ENCODE measurements at regions of chr12 and their contacts with region 1.

Region 1: DNA sequence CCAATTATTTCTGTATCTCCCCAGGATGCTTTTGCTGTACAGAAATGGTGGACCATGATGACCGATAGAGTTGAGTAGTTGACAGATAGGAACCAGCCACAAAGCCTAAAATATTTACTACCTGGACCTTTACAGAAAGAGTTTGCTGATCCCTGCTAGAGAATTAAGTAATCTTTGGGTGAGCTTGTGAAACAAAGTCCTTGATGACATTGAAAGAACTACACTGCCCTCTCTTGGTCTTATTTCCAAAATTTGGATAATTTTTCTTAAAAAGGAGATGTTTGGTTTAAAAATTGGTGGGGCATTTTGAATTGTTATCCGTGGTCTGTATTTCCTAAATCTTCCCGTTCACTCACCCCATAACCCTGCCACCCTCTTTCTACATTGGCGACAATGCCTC is 13.7 kb upstream of the TCTN1 start:
- DNase-seq: no peak
- ATAC-seq: peak; percentile 61
- H3K4me3 ChIP-seq: no peak overlapping the region
- H3K27ac ChIP-seq: no peak overlapping the region
- H3K4me1 ChIP-seq: peaks cover 13% of the 10 kb centered on the region
- H3K27me3 ChIP-seq: no peaks in the 10 kb centered on the region
- CTCF ChIP-seq: peak; percentile 18 to 69 (median 42); a peak in 4 of 6 replicates
- EP300 ChIP-seq: no peak
- POLR2A ChIP-seq: no peak
- RAD21 ChIP-seq: peak; percentile 85

Region 2: GRCh38 chr12:110449799-110450497 is 150.3 kb before region 1 on chr12 and contains the start of gene ARPC3:
- CTCF ChIA-PET with region 1: interaction called, 237 read pairs
- POLR2A ChIA-PET with region 1: interaction called, 25 read pairs
- RAD21 ChIA-PET with region 1: interaction called, 180 read pairs
- SMC1A ChIA-PET with region 1: interaction called, 152 read pairs
- in situ Hi-C with region 1: no loop called
- intact Hi-C with region 1: loop called (anchors 1 kb)
- DNase-seq: peak; percentile 77
- ATAC-seq: peak; percentile 98
- H3K4me3 ChIP-seq: peak within 1 kb of the TSS; percentile 97
- H3K27ac ChIP-seq: peak within 1 kb of the TSS; percentile 82
- H3K4me1 ChIP-seq: peaks cover 4% of the 10 kb centered on the region
- H3K27me3 ChIP-seq: no peaks in the 10 kb centered on the region
- CTCF ChIP-seq: peak; percentile 92 to 99 (median 94)
- EP300 ChIP-seq: no peak
- POLR2A ChIP-seq: peak; percentile 90
- RAD21 ChIP-seq: peak; percentile 93
- polyA plus RNA-seq, gene ARPC3: 635 to 890 TPM

Region 3: GRCh38 chr12:110508071-110508586 is 92.1 kb before region 1 on chr12:
- CTCF ChIA-PET with region 1: interaction called, 462 read pairs
- POLR2A ChIA-PET with region 1: interaction called, 31 read pairs
- RAD21 ChIA-PET with region 1: interaction called, 153 read pairs
- SMC1A ChIA-PET with region 1: interaction called, 492 read pairs
- in situ Hi-C with region 1: loop called (anchors 5 kb)
- intact Hi-C with region 1: loop called (anchors 1 kb)
- DNase-seq: no peak
- ATAC-seq: no peak
- H3K4me3 ChIP-seq: no peak overlapping the region
- H3K27ac ChIP-seq: no peak overlapping the region
- H3K4me1 ChIP-seq: no peaks in the 10 kb centered on the region; the same call in 1 of the 2 replicates
- H3K27me3 ChIP-seq: no peaks in the 10 kb centered on the region
- CTCF ChIP-seq: no peak
- EP300 ChIP-seq: no peak
- POLR2A ChIP-seq: no peak
- RAD21 ChIP-seq: no peak

Region 4: GRCh38 chr12:110548678-110549077 is 51.6 kb before region 1 on chr12:
- CTCF ChIA-PET with region 1: interaction called, 110 read pairs
- POLR2A ChIA-PET with region 1: interaction called, 3 read pairs
- RAD21 ChIA-PET with region 1: interaction called, 35 read pairs
- SMC1A ChIA-PET with region 1: interaction called, 92 read pairs
- in situ Hi-C with region 1: no loop called
- intact Hi-C with region 1: loop called (anchors 1 kb)
- DNase-seq: no peak
- ATAC-seq: no peak
- H3K4me3 ChIP-seq: no peak overlapping the region
- H3K27ac ChIP-seq: peak overlapping the region; percentile 31; the same call in 1 of the 2 replicates
- H3K4me1 ChIP-seq: peaks cover 16% of the 10 kb centered on the region
- H3K27me3 ChIP-seq: no peaks in the 10 kb centered on the region
- CTCF ChIP-seq: no peak
- EP300 ChIP-seq: no peak
- POLR2A ChIP-seq: no peak
- RAD21 ChIP-seq: no peak

Region 5: GRCh38 chr12:110583137-110584059 is 16.9 kb before region 1 on chr12 and contains the start of gene PPTC7:
- CTCF ChIA-PET with region 1: interaction called, 40 read pairs
- POLR2A ChIA-PET with region 1: interaction called, 7 read pairs
- RAD21 ChIA-PET with region 1: interaction called, 44 read pairs
- SMC1A ChIA-PET with region 1: interaction called, 35 read pairs
- in situ Hi-C with region 1: no loop called
- intact Hi-C with region 1: no loop called
- DNase-seq: peak; percentile 91
- ATAC-seq: peak; percentile 85
- H3K4me3 ChIP-seq: peak within 1 kb of the TSS; percentile 82
- H3K27ac ChIP-seq: peak within 1 kb of the TSS; percentile 95
- H3K4me1 ChIP-seq: peaks cover 36% of the 10 kb centered on the region
- H3K27me3 ChIP-seq: no peaks in the 10 kb centered on the region
- CTCF ChIP-seq: no peak
- EP300 ChIP-seq: no peak
- POLR2A ChIP-seq: peak; percentile 72
- RAD21 ChIP-seq: no peak
- polyA plus RNA-seq, gene PPTC7: 5.0 to 8.9 TPM

Region 6: DNA sequence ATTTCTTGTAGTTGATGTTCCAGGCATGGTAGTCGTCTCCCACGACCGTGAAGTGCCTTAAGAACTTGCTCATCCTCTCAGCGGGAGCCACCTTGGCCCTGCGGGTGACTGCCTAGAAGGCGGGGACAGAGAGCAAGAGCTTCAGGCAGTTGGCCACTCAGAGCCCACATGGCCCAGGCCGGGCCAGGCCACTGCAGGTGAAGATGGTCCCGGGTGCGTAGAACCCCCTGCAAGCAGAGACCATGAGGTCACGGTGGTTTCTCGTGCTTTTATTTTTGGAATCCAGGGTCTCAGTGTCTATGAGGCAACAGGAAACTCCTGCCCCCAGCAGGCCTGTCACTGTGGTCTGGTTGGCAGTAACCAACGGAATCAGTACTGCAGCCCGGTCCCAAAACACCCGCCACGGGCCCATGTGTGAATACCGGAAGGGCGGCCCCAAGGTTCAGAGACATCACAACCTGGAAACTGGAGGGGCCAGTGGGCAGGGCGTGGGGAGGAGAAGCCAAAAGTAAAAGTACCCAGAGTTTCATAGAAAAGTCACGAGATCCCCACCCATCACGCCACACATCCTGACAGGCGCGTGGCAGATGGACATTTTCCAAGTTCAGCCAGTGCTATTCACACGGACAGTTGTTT is 61.2 kb after region 1 on chr12:
- CTCF ChIA-PET with region 1: interaction called, 12 read pairs
- POLR2A ChIA-PET with region 1: interaction called, 8 read pairs
- RAD21 ChIA-PET with region 1: interaction called, 5 read pairs
- SMC1A ChIA-PET with region 1: interaction called, 7 read pairs
- in situ Hi-C with region 1: no loop called
- intact Hi-C with region 1: no loop called
- DNase-seq: peak; percentile 92
- ATAC-seq: peak; percentile 95
- H3K4me3 ChIP-seq: peak overlapping the region; percentile 65
- H3K27ac ChIP-seq: peak overlapping the region; percentile 88
- H3K4me1 ChIP-seq: peaks cover 44% of the 10 kb centered on the region
- H3K27me3 ChIP-seq: no peaks in the 10 kb centered on the region
- CTCF ChIP-seq: no peak
- EP300 ChIP-seq: peak; percentile 90 to 97
- POLR2A ChIP-seq: peak; percentile 82
- RAD21 ChIP-seq: peak; percentile 18; the same call in 1 of the 2 replicates

Region 7: DNA sequence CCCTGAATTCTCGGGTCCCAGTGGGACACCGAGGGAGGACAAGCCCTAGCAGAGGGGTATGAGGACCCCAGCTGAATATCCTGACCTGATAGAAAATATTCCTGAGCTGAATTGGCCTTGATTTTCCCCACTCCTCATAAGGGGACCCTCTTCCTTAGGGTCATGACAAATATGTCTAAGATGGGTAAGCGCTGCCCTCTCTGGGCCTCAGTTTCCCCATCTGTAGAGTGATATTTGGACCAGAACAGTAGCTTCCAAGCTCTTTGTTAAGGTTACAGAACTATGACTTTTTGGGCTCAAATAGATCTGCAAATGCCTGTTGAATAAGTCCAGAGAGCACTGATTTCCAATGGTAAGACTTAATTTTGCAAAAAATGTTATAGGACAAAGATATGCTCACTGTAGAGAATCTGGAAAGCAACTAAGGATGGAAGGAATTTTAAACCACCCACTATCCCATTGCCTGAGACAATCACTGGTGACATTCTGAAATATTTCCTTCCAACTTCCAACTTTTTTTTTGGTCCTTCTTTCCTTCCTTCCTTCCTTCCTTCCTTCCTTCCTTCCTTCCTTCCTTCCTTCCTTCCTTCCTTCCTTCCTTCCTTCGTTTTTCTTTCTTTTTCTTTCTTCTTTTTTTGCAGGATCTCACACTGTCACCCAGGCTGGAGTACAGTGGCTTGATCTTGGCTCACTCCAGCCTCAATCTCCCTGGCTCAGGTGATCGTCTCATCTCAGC is 288.2 kb after region 1 on chr12:
- CTCF ChIA-PET with region 1: interaction called, 27 read pairs
- POLR2A ChIA-PET with region 1: no interaction called
- RAD21 ChIA-PET with region 1: interaction called, 3 read pairs
- SMC1A ChIA-PET with region 1: interaction called, 5 read pairs
- in situ Hi-C with region 1: no loop called
- intact Hi-C with region 1: loop called (anchors 5 kb)
- DNase-seq: no peak
- ATAC-seq: no peak
- H3K4me3 ChIP-seq: no peak overlapping the region
- H3K27ac ChIP-seq: no peak overlapping the region
- H3K4me1 ChIP-seq: no peaks in the 10 kb centered on the region
- H3K27me3 ChIP-seq: no peaks in the 10 kb centered on the region; a peak in 1 of 4 replicates
- CTCF ChIP-seq: no peak
- EP300 ChIP-seq: no peak
- POLR2A ChIP-seq: no peak
- RAD21 ChIP-seq: no peak

Measured in GM12878 (cell line).